ENCODE measurements at regions of chr15 and their contacts with region 1.

Region 1: GRCh38 chr15:50675536-50676144 is 11.0 kb downstream of the TRPM7 start:
- DNase-seq: peak; percentile 5
- ATAC-seq: peak; percentile 64
- H3K4me3 ChIP-seq: no peak overlapping the region
- H3K27ac ChIP-seq: no peak overlapping the region
- H3K4me1 ChIP-seq: peaks cover 5% of the 10 kb centered on the region
- H3K27me3 ChIP-seq: no peaks in the 10 kb centered on the region
- CTCF ChIP-seq: peak; percentile 51 to 65 (median 58)
- EP300 ChIP-seq: no peak
- POLR2A ChIP-seq: no peak
- RAD21 ChIP-seq: peak; percentile 58

Region 2: DNA sequence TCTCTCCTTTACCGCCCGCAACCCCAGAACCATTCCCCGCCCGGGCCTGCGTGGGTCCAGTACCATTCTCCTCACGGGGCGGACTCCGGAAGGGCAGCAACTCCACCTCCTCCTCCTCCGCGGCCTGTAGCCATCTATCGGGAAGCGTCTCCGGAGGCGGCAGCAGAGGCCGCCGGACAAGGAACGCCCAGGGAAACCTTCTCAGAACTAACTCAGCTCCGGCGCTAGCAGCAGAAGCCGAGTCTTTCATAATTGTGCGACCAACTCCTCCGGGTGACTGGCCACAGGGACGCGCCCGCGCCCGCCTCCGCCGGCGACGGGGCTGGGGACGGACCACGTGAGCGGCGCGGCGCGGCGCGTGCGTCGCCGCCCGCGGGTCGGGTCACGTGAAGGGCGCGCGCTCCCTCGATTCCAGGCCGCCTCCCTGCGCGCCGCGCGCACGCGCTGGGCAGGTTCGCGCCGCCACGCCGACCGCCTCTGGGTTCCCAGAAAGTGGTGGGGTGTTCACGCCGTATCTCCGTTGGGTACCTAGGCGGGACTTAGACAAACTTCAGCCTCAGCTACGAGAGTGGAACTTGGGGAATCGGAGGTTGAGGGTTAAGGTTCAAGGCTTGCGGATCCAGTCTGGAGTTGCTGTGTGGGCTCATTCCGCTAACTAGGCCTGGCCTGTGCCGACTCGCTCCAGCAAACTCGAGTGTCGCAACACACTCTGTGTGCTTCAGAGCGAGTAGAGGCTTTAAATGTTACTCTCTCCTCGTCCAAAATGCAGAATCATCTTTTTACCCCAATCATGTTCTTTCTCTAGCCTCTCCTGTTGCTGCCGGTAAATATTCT is 11.0 kb after region 1 on chr15 and contains the start of gene TRPM7:
- CTCF ChIA-PET with region 1: interaction called, 20 read pairs
- POLR2A ChIA-PET with region 1: no interaction called
- RAD21 ChIA-PET with region 1: interaction called, 3 read pairs
- SMC1A ChIA-PET with region 1: interaction called, 6 read pairs
- in situ Hi-C with region 1: no loop called
- intact Hi-C with region 1: no loop called
- DNase-seq: peak; percentile 56
- ATAC-seq: peak; percentile 87
- H3K4me3 ChIP-seq: peak within 1 kb of the TSS; percentile 91
- H3K27ac ChIP-seq: peak within 1 kb of the TSS; percentile 86
- H3K4me1 ChIP-seq: no peaks in the 10 kb centered on the region; the same call in none of the 2 replicates
- H3K27me3 ChIP-seq: no peaks in the 10 kb centered on the region
- CTCF ChIP-seq: no peak
- EP300 ChIP-seq: no peak
- POLR2A ChIP-seq: peak; percentile 95
- RAD21 ChIP-seq: no peak
- polyA plus RNA-seq, gene TRPM7: 4.5 to 9.9 TPM

Region 3: DNA sequence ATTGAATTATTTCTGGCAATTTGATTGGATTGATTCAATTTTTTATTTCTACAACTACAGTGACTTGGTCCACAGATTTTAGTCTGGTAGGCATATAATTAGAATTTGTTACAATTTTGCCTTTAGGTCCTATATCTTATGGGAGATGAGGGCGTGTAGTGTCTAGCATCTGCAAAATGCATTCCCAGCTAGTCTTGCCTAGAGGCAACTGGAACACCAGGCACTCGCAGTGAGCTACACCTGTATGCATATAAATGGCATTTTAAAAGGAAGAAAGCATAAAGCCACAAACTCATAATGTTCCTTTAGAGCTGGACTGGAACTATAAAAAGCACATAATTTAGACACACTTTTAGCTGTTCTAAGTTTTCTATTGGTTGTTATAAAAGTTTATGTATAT is 107.8 kb after region 1 on chr15:
- CTCF ChIA-PET with region 1: no interaction called
- POLR2A ChIA-PET with region 1: no interaction called
- RAD21 ChIA-PET with region 1: no interaction called
- SMC1A ChIA-PET with region 1: no interaction called
- in situ Hi-C with region 1: no loop called
- intact Hi-C with region 1: no loop called
- DNase-seq: no peak
- ATAC-seq: no peak
- H3K4me3 ChIP-seq: no peak overlapping the region
- H3K27ac ChIP-seq: no peak overlapping the region
- H3K4me1 ChIP-seq: no peaks in the 10 kb centered on the region
- H3K27me3 ChIP-seq: no peaks in the 10 kb centered on the region
- CTCF ChIP-seq: no peak
- EP300 ChIP-seq: no peak
- POLR2A ChIP-seq: no peak
- RAD21 ChIP-seq: no peak

Region 4: DNA sequence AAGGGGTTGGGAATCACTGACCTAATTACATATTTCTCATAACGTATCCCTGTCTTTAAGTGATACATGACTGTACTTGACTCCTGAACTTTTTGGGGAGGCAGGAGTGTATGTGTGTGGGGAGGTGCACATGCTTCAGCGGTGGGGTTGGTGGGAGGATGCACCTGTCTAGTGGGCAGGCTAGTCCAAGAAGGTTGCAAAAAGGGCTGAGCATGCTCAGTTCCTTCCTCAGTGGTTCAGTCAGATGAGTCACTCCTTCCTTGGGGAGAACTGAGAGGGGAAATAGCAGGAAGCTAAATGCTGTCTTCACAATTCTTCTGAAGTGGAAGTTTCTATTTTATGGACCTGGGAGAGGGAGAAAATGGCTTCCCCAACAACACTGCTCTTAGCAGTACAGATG is 208.3 kb after region 1 on chr15:
- CTCF ChIA-PET with region 1: interaction called, 31 read pairs
- POLR2A ChIA-PET with region 1: interaction called, 3 read pairs
- RAD21 ChIA-PET with region 1: interaction called, 13 read pairs
- SMC1A ChIA-PET with region 1: interaction called, 28 read pairs
- in situ Hi-C with region 1: no loop called
- intact Hi-C with region 1: no loop called
- DNase-seq: peak; percentile 55
- ATAC-seq: no peak
- H3K4me3 ChIP-seq: no peak overlapping the region
- H3K27ac ChIP-seq: peak overlapping the region; percentile 4; the same call in 1 of the 2 replicates
- H3K4me1 ChIP-seq: peaks cover 56% of the 10 kb centered on the region
- H3K27me3 ChIP-seq: no peaks in the 10 kb centered on the region
- CTCF ChIP-seq: no peak
- EP300 ChIP-seq: no peak
- POLR2A ChIP-seq: no peak
- RAD21 ChIP-seq: no peak

Region 5: DNA sequence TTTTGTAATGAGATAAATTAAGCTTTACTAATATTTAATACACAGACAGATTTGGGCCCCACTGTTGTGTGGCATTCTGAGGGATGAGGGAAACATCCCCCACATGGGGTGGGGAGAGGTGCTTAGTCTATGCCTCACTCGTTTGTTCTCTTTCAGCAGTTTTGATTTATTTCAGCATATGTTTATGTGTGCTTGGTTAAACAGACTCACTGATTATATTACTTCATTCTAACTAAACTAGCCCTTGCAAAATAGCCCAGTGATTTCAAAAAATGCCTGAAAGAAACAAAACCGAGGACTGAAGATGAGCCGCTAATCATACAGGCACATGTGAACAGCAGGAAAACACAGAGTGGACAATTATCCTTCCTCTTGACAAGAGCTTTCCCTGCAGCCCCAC is 391.9 kb after region 1 on chr15:
- CTCF ChIA-PET with region 1: no interaction called
- POLR2A ChIA-PET with region 1: no interaction called
- RAD21 ChIA-PET with region 1: no interaction called
- SMC1A ChIA-PET with region 1: no interaction called
- in situ Hi-C with region 1: no loop called
- intact Hi-C with region 1: no loop called
- DNase-seq: no peak
- ATAC-seq: no peak
- H3K4me3 ChIP-seq: no peak overlapping the region
- H3K27ac ChIP-seq: no peak overlapping the region
- H3K4me1 ChIP-seq: peaks cover 23% of the 10 kb centered on the region
- H3K27me3 ChIP-seq: no peaks in the 10 kb centered on the region
- CTCF ChIP-seq: no peak
- EP300 ChIP-seq: no peak
- POLR2A ChIP-seq: no peak
- RAD21 ChIP-seq: no peak